Endothelial cell of umbilical vein (primary cell): ENCODE measurements at regions of chr1 and their contacts with region 1.

Region 1: GRCh38 chr1:9292361-9293240 is at the start of gene SPSB1:
- DNase-seq: peak; percentile 79
- H3K4me3 ChIP-seq: peak within 1 kb of the TSS; percentile 38 to 67 (median 64)
- H3K27ac ChIP-seq: peak within 1 kb of the TSS; percentile 54
- H3K4me1 ChIP-seq: peaks cover 15% of the 10 kb centered on the region
- H3K27me3 ChIP-seq: no peaks in the 10 kb centered on the region
- CTCF ChIP-seq: no peak
- POLR2A ChIP-seq: peak; percentile 92
- total RNA-seq, gene SPSB1: 41.9 and 50.9 TPM in 2 replicates

Region 2: GRCh38 chr1:9145021-9145668 is 147.5 kb before region 1 on chr1:
- CTCF ChIA-PET with region 1: no interaction called
- POLR2A ChIA-PET with region 1: no interaction called
- dilution Hi-C with region 1: no loop called
- intact Hi-C with region 1: no loop called
- DNase-seq: no peak
- H3K4me3 ChIP-seq: no peak overlapping the region
- H3K27ac ChIP-seq: no peak overlapping the region
- H3K4me1 ChIP-seq: peaks cover 9% of the 10 kb centered on the region
- H3K27me3 ChIP-seq: no peaks in the 10 kb centered on the region
- CTCF ChIP-seq: no peak
- POLR2A ChIP-seq: no peak

Region 3: DNA sequence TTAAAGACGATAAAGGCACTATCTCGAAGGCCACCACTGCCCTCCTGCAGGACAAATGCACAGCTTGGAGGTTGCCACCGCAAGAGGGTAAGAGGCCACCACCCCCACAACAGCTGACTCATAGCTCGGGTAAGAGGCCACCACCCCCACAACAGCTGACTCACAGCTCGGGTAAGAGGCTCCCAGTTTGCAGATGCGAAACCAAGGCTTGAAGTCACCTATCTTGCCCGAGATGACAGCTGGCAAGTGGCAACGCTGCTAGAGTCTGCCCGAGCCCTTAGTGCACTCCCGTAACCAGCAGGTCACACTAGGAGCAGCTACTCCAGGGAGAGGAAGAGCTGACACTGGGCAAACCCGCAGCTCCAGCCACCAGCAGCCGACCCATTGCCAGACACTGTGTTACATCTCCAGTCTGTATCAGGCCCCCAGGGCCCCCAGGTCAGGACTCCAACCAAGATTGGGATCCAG is 17.0 kb before region 1 on chr1:
- CTCF ChIA-PET with region 1: interaction called, 87 read pairs
- POLR2A ChIA-PET with region 1: no interaction called
- dilution Hi-C with region 1: no loop called
- intact Hi-C with region 1: no loop called
- DNase-seq: peak; percentile 63
- H3K4me3 ChIP-seq: no peak overlapping the region
- H3K27ac ChIP-seq: no peak overlapping the region
- H3K4me1 ChIP-seq: peaks cover 13% of the 10 kb centered on the region
- H3K27me3 ChIP-seq: no peaks in the 10 kb centered on the region
- CTCF ChIP-seq: no peak
- POLR2A ChIP-seq: no peak

Region 4: DNA sequence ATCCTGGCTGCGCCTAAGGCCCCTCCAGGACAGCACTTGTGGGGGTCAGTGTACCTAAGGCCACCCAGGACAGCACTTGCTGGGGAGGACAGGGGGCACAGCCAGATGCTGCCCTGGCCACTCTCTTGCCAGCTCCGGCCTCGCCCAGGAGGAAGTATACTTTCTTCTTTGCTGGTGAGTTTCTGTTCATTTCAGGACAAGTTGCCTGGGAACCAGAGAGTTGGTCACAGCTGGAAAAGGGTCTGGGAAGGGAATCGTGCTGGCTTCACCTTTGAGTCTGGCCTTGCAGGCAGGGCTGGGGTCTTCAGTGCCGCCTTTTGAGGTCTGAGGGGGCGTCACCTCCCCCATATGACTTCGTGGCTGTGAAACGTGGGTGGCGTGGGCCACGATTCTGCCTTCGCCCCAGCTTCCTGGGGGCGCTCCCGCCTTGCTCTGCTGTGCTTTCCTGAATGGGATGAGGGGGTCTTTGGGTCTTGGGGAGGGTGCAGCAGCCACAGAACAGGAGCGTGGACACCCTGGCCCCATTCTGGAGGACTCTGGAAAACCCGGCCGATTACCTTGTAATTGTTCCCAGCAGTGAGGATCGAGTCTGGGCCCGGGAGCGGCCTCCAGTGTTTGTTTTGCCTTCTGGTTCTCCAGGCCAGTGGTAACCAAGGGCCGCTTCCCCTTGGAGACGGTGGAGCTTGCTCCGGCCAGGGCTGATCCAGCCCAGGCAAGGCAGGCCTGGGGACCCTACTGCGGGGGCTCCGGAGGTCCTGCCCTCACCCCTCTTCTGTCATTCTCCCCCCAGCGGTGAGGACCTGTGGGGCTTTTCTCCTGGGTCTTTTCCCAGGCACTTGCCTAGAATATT is 46.0 kb after region 1 on chr1:
- CTCF ChIA-PET with region 1: interaction called, 3 read pairs
- POLR2A ChIA-PET with region 1: no interaction called
- dilution Hi-C with region 1: no loop called
- intact Hi-C with region 1: loop called (anchors 5 kb)
- DNase-seq: peak; percentile 57
- H3K4me3 ChIP-seq: no peak overlapping the region
- H3K27ac ChIP-seq: peak overlapping the region; percentile 68
- H3K4me1 ChIP-seq: peaks cover 23% of the 10 kb centered on the region
- H3K27me3 ChIP-seq: no peaks in the 10 kb centered on the region
- CTCF ChIP-seq: no peak
- POLR2A ChIP-seq: no peak

Region 5: GRCh38 chr1:9399510-9400424 is 107.2 kb after region 1 on chr1:
- CTCF ChIA-PET with region 1: interaction called, 17 read pairs
- POLR2A ChIA-PET with region 1: interaction called, 3 read pairs
- dilution Hi-C with region 1: no loop called
- intact Hi-C with region 1: loop called (anchors 1 kb)
- DNase-seq: peak; percentile 83
- H3K4me3 ChIP-seq: no peak overlapping the region
- H3K27ac ChIP-seq: peak overlapping the region; percentile 98
- H3K4me1 ChIP-seq: peaks cover 59% of the 10 kb centered on the region
- H3K27me3 ChIP-seq: no peaks in the 10 kb centered on the region
- CTCF ChIP-seq: no peak
- POLR2A ChIP-seq: no peak

Region 6: DNA sequence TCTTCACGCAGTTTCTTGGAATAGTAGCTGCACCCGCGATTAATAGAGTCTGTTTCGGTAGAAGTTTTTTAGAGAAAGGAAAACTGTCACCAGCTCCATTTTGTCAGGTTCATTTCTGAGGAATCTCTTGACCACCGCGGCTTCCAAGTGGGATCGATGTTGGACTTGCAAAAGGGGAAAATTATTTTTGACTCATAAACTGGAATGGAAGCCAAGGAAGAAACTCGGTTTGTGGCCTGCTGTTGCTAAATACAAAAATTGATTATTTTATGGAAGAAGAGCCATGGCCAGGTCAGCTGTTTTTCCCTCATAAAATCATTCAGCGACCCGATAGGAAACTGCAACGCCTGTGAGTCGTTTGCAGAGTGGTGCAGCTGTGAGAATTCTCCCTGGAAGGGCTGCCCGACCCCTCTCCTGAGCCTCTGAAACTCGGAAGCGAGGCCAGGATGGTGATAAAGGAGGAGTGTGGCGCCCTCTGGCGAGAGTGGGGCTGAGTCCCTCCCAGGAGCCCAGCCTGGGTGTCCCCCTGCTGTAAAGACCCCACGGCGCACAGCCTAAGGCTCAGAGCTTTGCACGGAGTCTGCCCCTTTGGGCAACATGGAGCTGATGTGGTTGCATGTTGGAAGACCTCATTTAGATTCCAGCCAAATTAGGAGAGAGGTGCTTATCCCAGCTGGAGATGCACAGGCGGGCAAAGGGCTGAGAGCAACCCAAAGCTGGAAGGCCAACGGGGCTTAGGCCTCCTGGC is 163.1 kb after region 1 on chr1:
- CTCF ChIA-PET with region 1: interaction called, 157 read pairs
- POLR2A ChIA-PET with region 1: no interaction called
- dilution Hi-C with region 1: no loop called
- intact Hi-C with region 1: loop called (anchors 1 kb)
- DNase-seq: peak; percentile 79
- H3K4me3 ChIP-seq: no peak overlapping the region
- H3K27ac ChIP-seq: no peak overlapping the region
- H3K4me1 ChIP-seq: no peaks in the 10 kb centered on the region
- H3K27me3 ChIP-seq: peaks cover 0 to 4% of the 10 kb centered on the region in 2 experiments
- CTCF ChIP-seq: peak; percentile 85 to 91
- POLR2A ChIP-seq: no peak